ENCODE measurements at regions of chr1 and their contacts with region 1.

Region 1: DNA sequence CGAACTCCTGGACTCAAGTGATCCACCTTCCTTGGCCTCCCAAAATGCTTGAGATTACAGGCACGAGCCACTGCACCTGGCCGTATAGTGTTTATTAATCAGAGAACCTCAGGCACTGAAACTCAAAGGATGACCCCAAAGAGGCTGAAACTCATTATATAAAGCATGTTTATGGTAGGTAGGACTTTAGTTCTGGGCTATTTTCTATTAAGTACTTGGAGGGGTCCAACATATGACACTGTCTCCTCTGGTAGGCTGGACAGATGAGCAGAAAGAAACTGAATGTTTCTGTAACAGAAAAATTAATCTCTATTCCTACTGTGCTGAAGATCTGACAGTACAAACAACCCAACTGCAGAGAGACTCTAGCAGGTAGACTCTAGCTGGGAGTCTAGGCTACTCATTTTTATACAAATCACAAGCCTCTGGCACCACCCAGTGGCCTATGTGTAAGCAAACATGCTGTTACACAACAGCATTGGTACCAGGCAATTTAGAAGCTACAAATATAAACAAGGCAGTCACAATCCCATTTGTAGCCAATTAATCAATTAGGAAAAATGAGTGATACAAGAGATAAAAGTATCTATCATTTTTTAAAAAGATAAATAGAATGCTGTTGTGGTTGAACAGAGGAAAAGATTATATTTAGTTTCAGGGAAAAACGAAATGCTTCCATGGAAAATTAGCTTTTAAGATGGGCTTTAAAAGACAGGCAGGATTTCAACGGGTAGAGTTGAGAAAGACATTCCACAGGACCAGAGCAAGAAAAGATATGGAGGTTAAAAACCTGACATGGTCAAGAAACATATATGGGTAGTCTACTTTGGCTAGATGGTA is 10.4 kb downstream of the DCAF8 start:
- DNase-seq: peak; percentile 73
- ATAC-seq: peak; percentile 95
- H3K4me3 ChIP-seq: no peak overlapping the region
- H3K4me3 Mint-ChIP-seq: no peak overlapping the region
- H3K27ac ChIP-seq: peak overlapping the region in 1 of 2 donors; percentile 3
- H3K27ac Mint-ChIP-seq: no peak overlapping the region
- H3K4me1 ChIP-seq: no peaks in the 10 kb centered on the region
- H3K4me1 Mint-ChIP-seq: peaks cover 10% of the 10 kb centered on the region
- H3K27me3 ChIP-seq: no peaks in the 10 kb centered on the region
- H3K27me3 Mint-ChIP-seq: no peaks in the 10 kb centered on the region
- CTCF ChIP-seq: peak; percentile 85

Region 2: DNA sequence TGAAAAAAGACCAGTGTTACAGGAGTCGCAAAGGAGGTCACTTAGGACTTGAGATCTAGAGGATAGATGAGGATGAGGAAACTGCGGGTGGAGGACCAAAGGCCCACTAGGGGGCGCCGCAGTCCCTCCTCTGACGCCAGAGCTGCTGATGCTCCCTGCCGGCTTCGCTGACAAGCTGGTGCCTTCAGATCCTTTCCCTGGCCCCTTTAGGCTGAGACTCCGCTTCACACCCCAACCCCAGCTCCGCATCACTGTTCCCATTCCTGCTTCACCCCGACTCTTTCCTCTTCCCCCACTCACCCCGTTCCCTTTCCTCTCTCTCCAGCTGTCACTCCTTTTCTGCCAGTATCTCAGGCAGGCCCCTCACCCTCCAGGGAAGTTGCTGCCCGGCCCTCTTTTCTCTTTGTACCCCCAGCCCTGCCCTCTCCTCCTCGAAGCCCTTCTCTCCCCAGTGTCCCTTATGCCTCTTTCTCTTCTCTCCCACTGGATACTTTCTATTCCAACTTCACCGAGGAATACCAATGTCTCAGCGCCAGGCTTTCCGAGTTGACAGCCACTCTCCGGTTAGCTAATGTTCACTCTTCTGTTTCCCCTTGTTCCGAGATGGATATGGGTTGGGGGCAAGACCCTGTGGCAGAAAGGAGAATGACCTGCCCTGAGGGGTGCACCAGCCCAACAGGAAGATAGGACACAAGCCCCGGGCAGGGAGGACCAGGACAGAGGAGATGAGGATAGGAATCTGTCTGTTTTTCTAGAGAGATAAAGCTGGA is 166.0 kb before region 1 on chr1:
- CTCF ChIA-PET with region 1: interaction called, 22 read pairs
- POLR2A ChIA-PET with region 1: no interaction called
- intact Hi-C with region 1: no loop called
- DNase-seq: peak; percentile 79
- ATAC-seq: peak; percentile 58
- H3K4me3 ChIP-seq: no peak overlapping the region
- H3K4me3 Mint-ChIP-seq: peak overlapping the region; percentile 26
- H3K27ac ChIP-seq: no peak overlapping the region
- H3K27ac Mint-ChIP-seq: peak overlapping the region; percentile 21
- H3K4me1 ChIP-seq: peaks cover 6 to 9% of the 10 kb centered on the region in 2 donors
- H3K4me1 Mint-ChIP-seq: peaks cover 12% of the 10 kb centered on the region
- H3K27me3 ChIP-seq: peaks cover 0 to 25% (median 18%) of the 10 kb centered on the region in 4 experiments
- H3K27me3 Mint-ChIP-seq: peaks cover 20% of the 10 kb centered on the region
- CTCF ChIP-seq: peak; percentile 85

Region 3: GRCh38 chr1:160193091-160193819 is 58.7 kb before region 1 on chr1:
- CTCF ChIA-PET with region 1: interaction called, 127 read pairs
- POLR2A ChIA-PET with region 1: interaction called, 3 read pairs
- intact Hi-C with region 1: loop called (anchors 1 kb)
- DNase-seq: peak; percentile 84
- ATAC-seq: peak; percentile 94
- H3K4me3 ChIP-seq: no peak overlapping the region
- H3K4me3 Mint-ChIP-seq: no peak overlapping the region
- H3K27ac ChIP-seq: no peak overlapping the region
- H3K27ac Mint-ChIP-seq: no peak overlapping the region
- H3K4me1 ChIP-seq: peaks cover 9 to 22% of the 10 kb centered on the region in 2 donors
- H3K4me1 Mint-ChIP-seq: peaks cover 3% of the 10 kb centered on the region
- H3K27me3 ChIP-seq: no peaks in the 10 kb centered on the region
- H3K27me3 Mint-ChIP-seq: peaks cover 3% of the 10 kb centered on the region
- CTCF ChIP-seq: peak; percentile 90

Region 4: DNA sequence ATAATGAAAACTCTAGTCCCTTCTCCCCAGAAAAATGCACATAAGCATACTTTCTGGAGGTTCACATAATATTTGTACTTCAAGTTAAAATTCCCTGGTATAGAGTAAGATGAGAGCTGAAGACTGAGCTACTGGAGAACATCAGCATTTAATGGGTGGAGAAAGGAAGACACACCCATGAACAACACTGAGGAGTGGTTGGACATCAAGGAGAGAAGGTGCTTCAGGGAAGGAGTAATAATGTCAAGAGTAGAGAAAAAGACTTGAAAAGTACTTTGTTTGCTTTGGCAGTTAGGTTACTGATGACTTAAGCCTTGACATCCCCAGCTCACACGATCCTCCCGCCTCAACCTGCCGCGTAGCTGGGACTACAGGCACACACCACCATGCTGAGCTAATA is 24.9 kb before region 1 on chr1:
- CTCF ChIA-PET with region 1: interaction called, 14 read pairs
- POLR2A ChIA-PET with region 1: interaction called, 3 read pairs
- intact Hi-C with region 1: no loop called
- DNase-seq: no peak
- ATAC-seq: no peak
- H3K4me3 ChIP-seq: no peak overlapping the region
- H3K4me3 Mint-ChIP-seq: no peak overlapping the region
- H3K27ac ChIP-seq: no peak overlapping the region
- H3K27ac Mint-ChIP-seq: no peak overlapping the region
- H3K4me1 ChIP-seq: no peaks in the 10 kb centered on the region
- H3K4me1 Mint-ChIP-seq: no peaks in the 10 kb centered on the region
- H3K27me3 ChIP-seq: no peaks in the 10 kb centered on the region
- H3K27me3 Mint-ChIP-seq: no peaks in the 10 kb centered on the region
- CTCF ChIP-seq: no peak

Region 5: DNA sequence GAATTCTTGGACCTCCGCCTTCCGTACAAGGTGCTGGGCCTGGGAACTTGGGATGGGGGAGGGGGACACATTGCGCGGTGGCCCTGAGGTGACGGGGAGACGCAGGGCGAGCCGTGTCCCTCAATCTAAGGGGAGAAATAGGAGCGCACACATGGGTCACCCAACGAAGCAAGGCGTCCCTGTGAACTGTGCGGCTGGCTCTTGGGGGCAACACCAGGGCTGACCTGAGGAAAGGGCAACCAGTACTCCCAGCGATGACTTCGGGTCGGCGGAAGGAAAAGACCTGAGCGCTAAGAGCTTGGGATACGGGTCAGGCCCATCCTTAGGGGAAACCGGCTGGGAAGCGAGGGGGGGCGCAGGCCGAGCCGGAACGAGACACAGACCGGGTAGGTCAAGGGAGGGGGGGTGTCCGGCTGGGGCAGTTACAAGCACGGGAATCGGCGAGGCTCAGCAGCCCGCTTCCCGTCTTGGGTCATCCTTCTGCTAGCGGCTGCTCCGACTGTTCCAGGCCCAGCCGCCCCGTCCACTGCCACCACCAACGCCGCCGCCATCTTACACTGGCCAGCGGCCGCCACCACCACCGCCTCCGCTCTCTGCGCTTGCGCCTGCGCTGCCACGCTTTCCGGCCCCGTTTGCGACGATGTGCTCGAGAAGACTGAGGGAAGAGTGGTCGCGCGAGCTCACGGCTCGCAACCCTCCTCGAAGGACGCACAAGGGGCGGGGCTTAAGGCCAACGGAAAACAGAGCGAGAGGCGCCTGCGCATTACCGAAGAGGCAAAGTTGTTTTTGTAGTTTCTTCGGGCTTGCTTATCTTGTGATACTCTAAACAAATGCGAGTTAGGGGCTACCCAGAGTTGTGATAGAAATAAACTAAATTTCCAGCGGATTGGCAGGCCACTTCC is 10.2 kb after region 1 on chr1 and contains the start of gene DCAF8:
- CTCF ChIA-PET with region 1: interaction called, 30 read pairs
- POLR2A ChIA-PET with region 1: interaction called, 8 read pairs
- intact Hi-C with region 1: no loop called
- DNase-seq: peak; percentile 98
- ATAC-seq: peak; percentile 92
- H3K4me3 ChIP-seq: peak within 1 kb of the TSS; percentile 96 to 100 (median 99)
- H3K4me3 Mint-ChIP-seq: peak within 1 kb of the TSS; percentile 100
- H3K27ac ChIP-seq: peak within 1 kb of the TSS; percentile 96 to 97
- H3K27ac Mint-ChIP-seq: peak within 1 kb of the TSS; percentile 92
- H3K4me1 ChIP-seq: peaks cover 20 to 22% of the 10 kb centered on the region in 2 donors
- H3K4me1 Mint-ChIP-seq: peaks cover 41% of the 10 kb centered on the region
- H3K27me3 ChIP-seq: no peaks in the 10 kb centered on the region
- H3K27me3 Mint-ChIP-seq: no peaks in the 10 kb centered on the region
- CTCF ChIP-seq: no peak
- total RNA-seq, gene DCAF8: 247 and 266 TPM in 2 replicates

Region 6: DNA sequence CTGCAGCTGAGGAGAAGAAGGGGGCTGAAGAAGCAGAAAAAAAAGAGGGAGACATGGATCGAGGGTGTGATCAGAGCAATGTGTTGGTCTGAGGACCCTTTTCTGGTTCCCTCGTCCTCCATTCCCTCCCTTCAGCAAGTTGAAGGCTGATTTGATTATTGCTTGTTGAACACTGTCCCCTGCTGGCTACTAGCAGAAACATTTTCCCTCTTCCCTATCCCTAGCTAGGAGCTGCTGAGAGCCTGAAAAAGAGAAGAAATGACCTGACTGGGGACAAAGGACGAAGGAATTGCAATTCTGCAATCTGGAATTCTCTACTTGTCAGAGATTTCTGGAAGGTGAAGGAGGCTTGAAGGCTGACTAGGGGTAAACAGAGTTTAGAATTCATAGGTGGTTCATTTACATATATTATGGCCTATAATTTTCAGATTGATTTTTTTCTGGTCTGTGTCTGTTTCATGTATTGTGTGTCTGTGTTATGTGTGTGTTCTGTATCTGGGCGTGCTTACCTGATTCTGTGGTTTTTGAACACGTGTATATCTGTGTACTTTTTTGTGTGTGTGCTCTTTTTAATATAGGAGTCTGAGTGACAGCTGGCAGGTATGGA is 124.7 kb after region 1 on chr1:
- CTCF ChIA-PET with region 1: interaction called, 22 read pairs
- POLR2A ChIA-PET with region 1: no interaction called
- intact Hi-C with region 1: no loop called
- DNase-seq: peak; percentile 76
- ATAC-seq: peak; percentile 67
- H3K4me3 ChIP-seq: peak overlapping the region in 1 of 5 experiments; percentile 21
- H3K4me3 Mint-ChIP-seq: peak overlapping the region; percentile 70
- H3K27ac ChIP-seq: no peak overlapping the region
- H3K27ac Mint-ChIP-seq: peak overlapping the region; percentile 60
- H3K4me1 ChIP-seq: peaks cover 19 to 23% of the 10 kb centered on the region in 2 donors
- H3K4me1 Mint-ChIP-seq: peaks cover 24% of the 10 kb centered on the region
- H3K27me3 ChIP-seq: no peaks in the 10 kb centered on the region
- H3K27me3 Mint-ChIP-seq: no peaks in the 10 kb centered on the region
- CTCF ChIP-seq: peak; percentile 83

Measured in B cell (primary cell).